ENCODE measurements at regions of chr6 and their contacts with region 1.

Region 1: DNA sequence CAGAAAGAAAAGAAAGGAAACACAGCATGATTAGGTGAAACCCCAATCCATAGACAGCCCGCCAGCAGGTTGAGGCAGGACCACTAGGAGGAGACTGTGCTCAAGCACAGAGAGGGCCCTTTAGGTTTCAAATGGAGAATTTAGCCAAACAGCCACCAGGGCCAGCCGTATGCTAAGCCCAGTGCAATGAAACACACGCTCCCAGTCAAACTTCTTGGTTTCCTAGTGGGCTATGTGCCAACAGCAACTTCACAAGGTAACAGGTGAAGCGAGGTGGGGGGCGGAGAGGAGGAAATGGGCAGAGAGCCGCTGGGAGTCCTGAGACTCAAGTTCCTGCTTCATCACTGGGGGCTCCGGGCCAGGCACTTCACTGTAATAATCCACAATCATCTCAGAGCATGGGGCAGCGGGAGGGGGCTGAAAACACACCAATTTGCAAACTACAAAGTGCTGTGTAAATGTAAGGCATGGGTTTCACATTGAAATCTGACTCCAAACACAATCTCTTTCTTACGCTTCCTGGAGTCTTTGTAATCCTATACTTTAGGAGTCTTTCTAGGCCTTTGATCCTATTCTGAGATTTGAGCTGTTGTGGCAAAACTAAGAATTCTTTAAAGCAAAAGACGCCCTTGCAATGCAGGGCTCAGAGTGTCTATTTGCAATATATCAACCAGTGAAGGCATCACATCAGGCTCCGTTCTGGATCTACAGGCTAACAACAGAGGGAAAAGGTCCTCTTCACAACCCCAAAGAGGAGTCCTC is 117.3 kb downstream of the OPRM1 start:
- DNase-seq: peak; percentile 29 to 70 (median 58)
- ATAC-seq: peak; percentile 92
- H3K4me3 ChIP-seq: peak overlapping the region; percentile 57
- H3K4me3 Mint-ChIP-seq: peak overlapping the region; percentile 57 to 91 (median 81)
- H3K27ac ChIP-seq: peak overlapping the region; percentile 71
- H3K27ac Mint-ChIP-seq: peak overlapping the region; percentile 81 to 98 (median 92)
- H3K4me1 ChIP-seq: peaks cover 24 to 34% of the 10 kb centered on the region in 2 donors
- H3K4me1 Mint-ChIP-seq: peaks cover 29 to 84% (median 67%) of the 10 kb centered on the region in 7 donors
- H3K27me3 ChIP-seq: no peaks in the 10 kb centered on the region
- H3K27me3 Mint-ChIP-seq: peaks cover 0 to 2% (median 0%) of the 10 kb centered on the region in 5 donors

Region 2: DNA sequence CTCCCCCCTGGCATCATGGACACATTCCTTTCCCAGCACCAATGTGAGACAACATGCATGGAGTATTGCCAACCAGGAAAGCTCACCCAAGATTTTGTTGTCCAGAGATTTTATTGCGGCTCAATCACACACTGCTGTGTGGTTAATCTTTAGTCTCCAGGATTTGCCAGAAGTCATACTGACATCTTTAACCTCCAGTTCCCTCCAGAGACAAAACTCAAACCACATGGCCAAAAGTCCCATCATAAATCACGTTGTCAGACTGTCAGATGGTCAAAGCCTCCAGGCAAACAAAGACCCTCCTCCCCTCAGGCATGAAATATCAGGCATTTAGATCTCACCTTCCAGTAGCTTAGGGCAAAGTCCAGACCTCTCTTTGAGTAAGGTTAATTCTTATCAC is 214.5 kb before region 1 on chr6:
- CTCF ChIA-PET with region 1: no interaction called
- POLR2A ChIA-PET with region 1: no interaction called
- intact Hi-C with region 1: no loop called
- DNase-seq: no peak
- ATAC-seq: no peak
- H3K4me3 ChIP-seq: no peak overlapping the region
- H3K4me3 Mint-ChIP-seq: no peak overlapping the region
- H3K27ac ChIP-seq: no peak overlapping the region
- H3K27ac Mint-ChIP-seq: no peak overlapping the region
- H3K4me1 ChIP-seq: no peaks in the 10 kb centered on the region
- H3K4me1 Mint-ChIP-seq: no peaks in the 10 kb centered on the region
- H3K27me3 ChIP-seq: no peaks in the 10 kb centered on the region
- H3K27me3 Mint-ChIP-seq: peaks cover 0 to 15% (median 8%) of the 10 kb centered on the region in 5 donors

Region 3: GRCh38 chr6:154218301-154218700 is 62.0 kb after region 1 on chr6:
- CTCF ChIA-PET with region 1: interaction called, 4 read pairs
- POLR2A ChIA-PET with region 1: interaction called, 3 read pairs
- intact Hi-C with region 1: loop called in 1 of 2 experiments (anchors 1 kb)
- DNase-seq: peak in 3 of 9 donors; percentile 17 to 34 (median 33)
- ATAC-seq: peak; percentile 54
- H3K4me3 ChIP-seq: no peak overlapping the region
- H3K4me3 Mint-ChIP-seq: peak overlapping the region in 9 of 10 donors; percentile 39 to 86 (median 78)
- H3K27ac ChIP-seq: peak overlapping the region; percentile 38
- H3K27ac Mint-ChIP-seq: peak overlapping the region in 8 of 9 donors; percentile 66 to 96 (median 88)
- H3K4me1 ChIP-seq: peaks cover 0 to 45% of the 10 kb centered on the region in 2 donors
- H3K4me1 Mint-ChIP-seq: peaks cover 22 to 79% (median 72%) of the 10 kb centered on the region in 7 donors
- H3K27me3 ChIP-seq: no peaks in the 10 kb centered on the region
- H3K27me3 Mint-ChIP-seq: no peaks in the 10 kb centered on the region

Region 4: GRCh38 chr6:154276810-154277628 is 120.7 kb after region 1 on chr6:
- CTCF ChIA-PET with region 1: interaction called, 186 read pairs
- POLR2A ChIA-PET with region 1: interaction called, 12 read pairs
- intact Hi-C with region 1: loop called (anchors 1 kb)
- DNase-seq: peak in 7 of 9 donors; percentile 28 to 68 (median 58)
- ATAC-seq: peak; percentile 84
- H3K4me3 ChIP-seq: peak overlapping the region; percentile 23
- H3K4me3 Mint-ChIP-seq: peak overlapping the region; percentile 59 to 91 (median 68)
- H3K27ac ChIP-seq: peak overlapping the region; percentile 27
- H3K27ac Mint-ChIP-seq: peak overlapping the region in 8 of 9 donors; percentile 44 to 75 (median 64)
- H3K4me1 ChIP-seq: peaks cover 5 to 27% of the 10 kb centered on the region in 2 donors
- H3K4me1 Mint-ChIP-seq: peaks cover 20 to 50% (median 44%) of the 10 kb centered on the region in 7 donors
- H3K27me3 ChIP-seq: no peaks in the 10 kb centered on the region
- H3K27me3 Mint-ChIP-seq: peaks cover 0 to 16% (median 0%) of the 10 kb centered on the region in 5 donors

Region 5: GRCh38 chr6:154408891-154409500 is 252.7 kb after region 1 on chr6:
- CTCF ChIA-PET with region 1: no interaction called
- POLR2A ChIA-PET with region 1: no interaction called
- intact Hi-C with region 1: loop called in 1 of 2 experiments (anchors 1 kb)
- DNase-seq: peak in 3 of 9 donors; percentile 4 to 21 (median 4)
- ATAC-seq: no peak
- H3K4me3 ChIP-seq: no peak overlapping the region
- H3K4me3 Mint-ChIP-seq: no peak overlapping the region
- H3K27ac ChIP-seq: no peak overlapping the region
- H3K27ac Mint-ChIP-seq: no peak overlapping the region
- H3K4me1 ChIP-seq: no peaks in the 10 kb centered on the region
- H3K4me1 Mint-ChIP-seq: no peaks in the 10 kb centered on the region
- H3K27me3 ChIP-seq: no peaks in the 10 kb centered on the region
- H3K27me3 Mint-ChIP-seq: peaks cover 0 to 4% (median 1%) of the 10 kb centered on the region in 5 donors

Region 6: GRCh38 chr6:154733012-154733625 is 576.8 kb after region 1 on chr6 and contains the start of gene SCAF8:
- CTCF ChIA-PET with region 1: no interaction called
- POLR2A ChIA-PET with region 1: no interaction called
- intact Hi-C with region 1: loop called in 1 of 2 experiments (anchors 5 kb)
- DNase-seq: peak; percentile 72 to 96 (median 90)
- ATAC-seq: peak; percentile 88
- H3K4me3 ChIP-seq: peak within 1 kb of the TSS; percentile 81
- H3K4me3 Mint-ChIP-seq: peak within 1 kb of the TSS; percentile 89 to 98 (median 92)
- H3K27ac ChIP-seq: peak within 1 kb of the TSS; percentile 93
- H3K27ac Mint-ChIP-seq: peak within 1 kb of the TSS; percentile 85 to 99 (median 93)
- H3K4me1 ChIP-seq: peaks cover 26 to 36% of the 10 kb centered on the region in 2 donors
- H3K4me1 Mint-ChIP-seq: peaks cover 20 to 49% (median 44%) of the 10 kb centered on the region in 7 donors
- H3K27me3 ChIP-seq: no peaks in the 10 kb centered on the region
- H3K27me3 Mint-ChIP-seq: no peaks in the 10 kb centered on the region
- total RNA-seq, gene SCAF8: 41.1 to 69.2 (median 54.9) TPM

Measured in naive thymus-derived CD4-positive, alpha-beta T cell (primary cell).